Stomach (tissue), 19 donors: ENCODE measurements at regions of chr17 and their contacts with region 1.

Region 1: DNA sequence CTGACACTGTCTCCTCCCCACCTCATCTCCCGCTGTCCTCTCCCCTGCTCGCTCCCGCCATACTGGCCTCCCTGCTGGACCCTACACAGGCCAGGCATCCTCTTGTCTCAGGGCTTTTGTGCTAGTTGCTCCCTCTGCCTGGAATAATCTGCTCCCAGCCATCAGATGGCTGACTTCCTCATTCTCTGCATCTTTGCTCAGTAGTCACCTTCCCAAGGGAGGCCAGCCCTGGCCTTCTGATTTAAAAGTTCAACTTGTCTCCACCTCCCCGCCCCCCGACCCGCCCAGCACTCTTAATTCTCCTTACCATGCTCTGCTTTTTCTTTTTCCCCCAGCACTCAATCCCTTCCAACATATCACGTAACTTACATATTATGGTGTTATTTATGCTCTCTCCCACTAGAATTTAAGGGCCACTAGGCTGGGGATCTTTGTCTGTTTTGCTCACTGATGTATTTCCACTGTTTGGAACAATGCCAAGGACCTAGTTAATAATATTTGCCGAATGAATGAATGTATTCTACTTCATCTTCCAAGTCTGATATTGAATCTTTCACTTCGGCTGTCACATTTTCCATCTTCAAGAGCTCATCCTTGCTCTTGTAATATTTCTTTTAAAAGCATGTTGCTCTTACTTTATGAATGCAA is 178.3 kb downstream of the CDK5R1 start:
- DNase-seq: no peak
- H3K4me3 ChIP-seq: no peak overlapping the region
- H3K27ac ChIP-seq: no peak overlapping the region
- H3K4me1 ChIP-seq: no peaks in the 10 kb centered on the region
- H3K27me3 ChIP-seq: no peaks in the 10 kb centered on the region
- CTCF ChIP-seq: no peak
- EP300 ChIP-seq: no peak
- POLR2A ChIP-seq: no peak

Region 2: DNA sequence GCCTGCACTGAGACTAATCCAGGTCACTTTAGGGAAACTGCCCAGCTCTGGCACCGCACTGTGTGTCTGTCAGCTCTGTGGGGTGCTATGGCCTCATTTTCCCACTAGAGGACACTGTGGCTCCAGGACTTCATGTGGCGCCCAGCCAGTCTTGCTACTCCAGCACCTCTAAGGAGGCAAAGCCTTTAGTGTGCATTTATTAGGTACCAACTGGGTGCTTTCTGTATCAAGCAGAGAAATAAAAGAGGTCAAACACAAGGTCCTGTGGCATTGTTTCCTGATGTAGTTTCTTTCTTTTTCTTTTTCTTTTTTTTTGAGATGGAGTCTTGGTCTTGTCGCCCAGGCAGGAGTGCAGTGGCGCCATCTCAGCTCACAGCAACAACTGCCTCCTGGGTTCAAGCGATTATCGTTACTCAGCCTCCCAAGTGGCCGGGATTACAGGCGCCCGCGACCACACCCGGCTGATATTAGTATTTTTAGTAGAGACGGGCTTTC is 411.9 kb before region 1 on chr17:
- intact Hi-C with region 1: no loop called
- DNase-seq: peak; percentile 87 to 92
- H3K4me3 ChIP-seq: no peak overlapping the region
- H3K27ac ChIP-seq: no peak overlapping the region
- H3K4me1 ChIP-seq: peaks cover 0 to 12% (median 12%) of the 10 kb centered on the region in 4 donors
- H3K27me3 ChIP-seq: no peaks in the 10 kb centered on the region
- CTCF ChIP-seq: peak in 5 of 7 experiments; percentile 86 to 95 (median 94)
- EP300 ChIP-seq: no peak
- POLR2A ChIP-seq: no peak

Region 3: DNA sequence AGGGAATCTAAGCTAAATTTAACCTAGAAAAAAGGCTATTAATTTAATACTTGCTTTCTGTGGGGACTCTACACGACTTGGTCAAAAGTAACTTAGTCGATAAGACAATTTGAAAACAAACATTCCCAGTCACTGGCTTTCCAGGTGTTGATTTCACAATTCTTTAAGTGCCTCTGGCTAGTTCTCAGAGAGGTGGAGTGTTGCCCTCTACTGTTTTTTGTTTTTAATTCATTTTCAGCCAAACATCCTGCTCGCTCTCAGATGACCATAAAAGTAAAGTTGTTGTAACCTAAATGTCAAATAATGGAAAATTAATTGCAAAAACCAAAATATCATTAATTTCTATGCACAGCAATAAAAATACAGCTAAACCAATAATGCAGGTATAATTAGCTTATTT is 104.8 kb after region 1 on chr17:
- intact Hi-C with region 1: loop called (anchors 10 kb)
- DNase-seq: peak in 1 of 2 donors; percentile 50
- H3K4me3 ChIP-seq: no peak overlapping the region
- H3K27ac ChIP-seq: no peak overlapping the region
- H3K4me1 ChIP-seq: no peaks in the 10 kb centered on the region
- H3K27me3 ChIP-seq: no peaks in the 10 kb centered on the region
- CTCF ChIP-seq: no peak
- EP300 ChIP-seq: no peak
- POLR2A ChIP-seq: no peak